Pancreas (tissue), 10 donors: ENCODE measurements at regions of chr1 and their contacts with region 1.

Region 1: GRCh38 chr1:184805667-184806295 is 51.1 kb upstream of the EDEM3 start:
- DNase-seq: peak; percentile 82 to 93 (median 88)
- ATAC-seq: peak; percentile 94 to 98 (median 97)
- H3K4me3 ChIP-seq: no peak overlapping the region
- H3K27ac ChIP-seq: peak overlapping the region in 2 of 4 donors; percentile 6 to 31
- H3K4me1 ChIP-seq: peaks cover 0 to 4% (median 1%) of the 10 kb centered on the region in 3 donors
- H3K27me3 ChIP-seq: no peaks in the 10 kb centered on the region
- CTCF ChIP-seq: peak; percentile 84 to 93 (median 88)

Region 2: GRCh38 chr1:184958554-184959353 is 153.0 kb after region 1 on chr1:
- intact Hi-C with region 1: no loop called
- DNase-seq: no peak
- ATAC-seq: peak in 3 of 4 donors; percentile 41 to 54 (median 50)
- H3K4me3 ChIP-seq: no peak overlapping the region
- H3K27ac ChIP-seq: peak overlapping the region in 1 of 4 donors; percentile 9
- H3K4me1 ChIP-seq: peaks cover 6 to 9% (median 7%) of the 10 kb centered on the region in 3 donors
- H3K27me3 ChIP-seq: no peaks in the 10 kb centered on the region
- CTCF ChIP-seq: no peak

Region 3: GRCh38 chr1:184973272-184974055 is 167.7 kb after region 1 on chr1:
- intact Hi-C with region 1: loop called in 2 of 3 experiments (anchors 5 to 10 kb)
- DNase-seq: peak in 3 of 6 donors; percentile 46 to 66 (median 64)
- ATAC-seq: peak; percentile 36 to 57 (median 53)
- H3K4me3 ChIP-seq: peak overlapping the region; percentile 24 to 76 (median 70)
- H3K27ac ChIP-seq: peak overlapping the region; percentile 16 to 88 (median 84)
- H3K4me1 ChIP-seq: peaks cover 0 to 20% (median 0%) of the 10 kb centered on the region in 3 donors
- H3K27me3 ChIP-seq: no peaks in the 10 kb centered on the region
- CTCF ChIP-seq: no peak

Region 4: GRCh38 chr1:184982002-184982954 is 176.5 kb after region 1 on chr1:
- intact Hi-C with region 1: loop called in 2 of 3 experiments (anchors 5 to 10 kb)
- DNase-seq: peak; percentile 55 to 84 (median 70)
- ATAC-seq: peak; percentile 95 to 100 (median 100)
- H3K4me3 ChIP-seq: no peak overlapping the region
- H3K27ac ChIP-seq: no peak overlapping the region
- H3K4me1 ChIP-seq: no peaks in the 10 kb centered on the region
- H3K27me3 ChIP-seq: no peaks in the 10 kb centered on the region
- CTCF ChIP-seq: peak; percentile 54 to 91 (median 86)